Sciatic nerve (tissue), 2 donors: ENCODE measurements at regions of chr15 and their contacts with region 1.

Region 1: DNA sequence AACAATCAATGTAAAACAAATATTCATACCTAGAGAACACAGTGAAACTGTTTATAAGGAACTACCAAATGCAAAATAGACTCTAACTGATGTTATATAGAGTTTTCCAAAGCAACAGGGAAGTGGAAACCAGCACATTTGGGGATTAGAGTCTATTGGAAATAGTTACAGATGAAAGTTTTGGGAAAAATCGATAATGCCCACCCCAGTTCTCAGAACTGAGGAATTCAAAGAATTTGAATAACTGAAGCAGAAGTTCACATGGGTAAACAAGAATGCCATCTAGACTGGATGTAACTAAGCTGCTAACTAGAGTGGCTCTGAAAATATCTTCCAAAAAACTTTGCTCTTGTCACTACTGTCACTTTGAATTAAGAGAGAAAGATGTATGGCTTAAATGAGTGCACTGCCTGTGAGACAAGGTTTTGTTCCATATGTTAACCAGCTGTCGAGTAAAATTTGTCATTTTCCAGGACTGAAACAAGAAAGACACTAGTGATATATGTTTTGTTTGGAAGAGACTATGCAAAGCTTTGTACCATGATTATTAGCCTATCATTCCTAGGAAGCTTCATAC is 9.2 kb upstream of the DENND4A start:
- DNase-seq: no peak
- ATAC-seq: no peak

Region 2: GRCh38 chr15:65837301-65838294 is 36.3 kb after region 1 on chr15:
- intact Hi-C with region 1: loop called (anchors 2 kb)
- DNase-seq: no peak
- ATAC-seq: no peak